ENCODE measurements at regions of chr19 and their contacts with region 1.

Region 1: GRCh38 chr19:11293433-11294389 is 2.2 kb upstream of the TSPAN16 start:
- DNase-seq: peak; percentile 94
- H3K4me3 ChIP-seq: peak overlapping the region in 1 of 3 experiments; percentile 17
- H3K27ac ChIP-seq: no peak overlapping the region
- H3K4me1 ChIP-seq: no peaks in the 10 kb centered on the region
- H3K27me3 ChIP-seq: peaks cover 0 to under 1% of the 10 kb centered on the region in 2 experiments
- CTCF ChIP-seq: peak; percentile 97 to 99
- POLR2A ChIP-seq: peak; percentile 51

Region 2: DNA sequence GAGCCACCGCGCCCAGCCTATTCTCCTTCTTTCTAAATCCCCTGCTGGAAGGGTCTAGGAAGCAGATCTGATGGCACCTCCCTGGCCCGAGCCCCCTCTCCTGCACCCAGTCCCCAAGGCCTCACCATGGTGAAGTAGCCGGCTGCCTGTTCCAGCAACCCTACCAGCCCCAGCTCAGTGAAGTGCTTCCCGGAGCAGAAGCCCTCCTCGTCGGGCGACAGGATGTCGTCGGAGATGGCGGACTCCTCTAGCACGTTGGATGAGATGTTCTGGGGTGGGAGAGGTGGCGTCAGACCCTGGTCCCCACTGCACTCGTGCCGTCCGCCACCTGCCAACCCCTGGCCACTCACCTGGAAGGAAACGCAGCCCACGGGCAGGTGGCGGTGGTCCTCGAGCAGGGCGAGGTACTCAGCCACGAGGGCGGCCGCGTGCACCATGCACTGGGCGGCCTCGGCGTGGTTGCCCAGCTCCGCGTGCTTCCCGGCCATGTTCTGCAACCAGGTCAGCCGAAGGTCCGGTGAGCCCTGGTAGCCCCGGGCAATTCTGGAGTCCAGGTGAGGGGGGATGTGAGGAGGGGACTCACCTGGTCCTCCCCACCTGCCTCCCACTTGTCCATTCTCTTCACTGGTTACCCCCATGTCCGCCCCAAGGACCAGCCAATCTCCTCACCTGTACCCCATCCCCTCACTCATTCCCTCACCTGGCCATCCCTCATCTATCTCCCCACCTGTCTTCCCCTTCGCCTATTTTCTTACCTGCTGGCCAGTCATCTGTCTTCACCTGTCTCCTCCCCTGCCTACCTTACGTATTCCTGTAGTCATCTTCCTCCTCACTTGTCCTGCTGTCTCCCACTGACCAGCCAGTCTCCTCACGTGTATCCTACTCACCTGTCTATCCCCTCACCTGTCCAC is 84.9 kb before region 1 on chr19:
- CTCF ChIA-PET with region 1: no interaction called
- POLR2A ChIA-PET with region 1: no interaction called
- dilution Hi-C with region 1: no loop called
- intact Hi-C with region 1: no loop called
- DNase-seq: no peak
- H3K4me3 ChIP-seq: no peak overlapping the region
- H3K27ac ChIP-seq: no peak overlapping the region
- H3K4me1 ChIP-seq: peaks cover 5% of the 10 kb centered on the region
- H3K27me3 ChIP-seq: no peaks in the 10 kb centered on the region
- CTCF ChIP-seq: no peak
- POLR2A ChIP-seq: no peak

Region 3: DNA sequence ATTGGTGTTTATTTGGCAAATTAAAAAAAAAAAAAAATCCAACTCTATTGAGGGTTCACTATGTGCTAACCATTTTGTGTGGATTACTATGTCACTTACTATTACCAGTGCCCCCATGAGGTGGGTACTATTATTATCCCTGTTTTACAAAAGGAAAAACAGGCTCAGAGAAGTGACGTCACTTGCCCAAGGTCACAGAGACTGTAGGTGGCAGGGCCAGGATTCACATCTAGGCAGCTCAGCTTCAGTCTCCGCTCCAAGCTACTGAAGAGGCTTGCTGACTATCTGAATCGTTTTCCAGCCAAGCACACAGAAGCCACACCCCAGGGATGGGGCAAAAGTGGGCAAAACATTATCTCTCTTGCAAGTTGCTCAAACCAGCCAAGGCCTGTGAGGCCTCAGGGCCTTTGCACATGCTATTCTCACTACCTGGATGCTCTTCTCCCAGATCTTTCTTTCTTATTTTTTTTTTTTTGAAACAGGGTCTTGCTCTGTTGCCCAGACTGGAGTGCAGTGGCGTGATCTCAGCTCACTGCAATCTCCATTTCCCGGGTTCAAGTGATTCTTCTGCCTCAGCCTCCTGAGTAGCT is 59.1 kb before region 1 on chr19:
- CTCF ChIA-PET with region 1: no interaction called
- POLR2A ChIA-PET with region 1: no interaction called
- dilution Hi-C with region 1: no loop called
- intact Hi-C with region 1: no loop called
- DNase-seq: no peak
- H3K4me3 ChIP-seq: no peak overlapping the region
- H3K27ac ChIP-seq: no peak overlapping the region
- H3K4me1 ChIP-seq: no peaks in the 10 kb centered on the region
- H3K27me3 ChIP-seq: no peaks in the 10 kb centered on the region
- CTCF ChIP-seq: no peak
- POLR2A ChIP-seq: no peak

Region 4: GRCh38 chr19:11279496-11280236 is 14.0 kb before region 1 on chr19:
- CTCF ChIA-PET with region 1: interaction called, 23 read pairs
- POLR2A ChIA-PET with region 1: no interaction called
- dilution Hi-C with region 1: no loop called
- intact Hi-C with region 1: no loop called
- DNase-seq: no peak
- H3K4me3 ChIP-seq: no peak overlapping the region
- H3K27ac ChIP-seq: no peak overlapping the region
- H3K4me1 ChIP-seq: peaks cover 7% of the 10 kb centered on the region
- H3K27me3 ChIP-seq: no peaks in the 10 kb centered on the region
- CTCF ChIP-seq: no peak
- POLR2A ChIP-seq: no peak

Region 5: GRCh38 chr19:11339254-11340098 is 45.8 kb after region 1 on chr19 and contains the start of gene RAB3D:
- CTCF ChIA-PET with region 1: interaction called, 23 read pairs
- POLR2A ChIA-PET with region 1: no interaction called
- dilution Hi-C with region 1: no loop called
- intact Hi-C with region 1: loop called (anchors 1 kb)
- DNase-seq: peak; percentile 88
- H3K4me3 ChIP-seq: peak within 1 kb of the TSS; percentile 43 to 91 (median 52)
- H3K27ac ChIP-seq: no peak within 1 kb of the TSS
- H3K4me1 ChIP-seq: peaks cover 16% of the 10 kb centered on the region
- H3K27me3 ChIP-seq: no peaks in the 10 kb centered on the region
- CTCF ChIP-seq: no peak
- POLR2A ChIP-seq: peak; percentile 54
- total RNA-seq, gene RAB3D: 41.1 and 48.2 TPM in 2 replicates

Region 6: DNA sequence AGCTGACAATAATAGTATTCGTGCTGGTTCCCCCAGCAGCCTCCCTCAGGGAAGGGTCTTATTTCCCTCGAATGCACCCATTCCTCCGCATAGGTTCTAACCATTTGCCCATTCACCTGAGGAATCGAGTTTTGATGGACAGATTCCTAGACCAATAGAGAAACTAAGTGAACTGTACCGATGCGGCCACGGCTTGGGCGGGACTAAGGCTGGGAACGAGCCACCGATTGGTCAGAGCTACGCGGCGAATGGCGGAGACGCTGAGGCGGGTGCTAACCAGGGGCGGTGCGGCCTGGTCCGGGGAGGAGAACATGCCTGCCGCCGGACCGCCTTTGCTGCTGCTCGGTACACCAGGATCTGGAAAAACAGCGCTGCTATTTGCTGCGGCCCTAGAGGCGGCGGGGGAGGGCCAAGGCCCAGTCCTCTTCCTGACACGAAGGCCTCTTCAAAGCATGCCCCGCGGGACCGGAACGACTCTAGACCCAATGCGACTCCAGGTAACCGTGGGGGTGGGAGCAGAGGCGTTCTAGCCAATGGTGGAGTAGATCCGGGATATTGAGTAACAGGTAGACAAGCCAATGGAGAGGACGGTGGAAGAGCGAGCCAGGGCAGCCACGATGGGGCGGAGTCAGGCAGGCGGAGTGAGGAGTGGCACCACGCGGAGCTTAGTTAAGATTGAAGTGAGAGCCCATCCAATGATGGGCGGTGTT is 80.9 kb after region 1 on chr19 and contains the start of gene SWSAP1:
- CTCF ChIA-PET with region 1: interaction called, 22 read pairs
- POLR2A ChIA-PET with region 1: interaction called, 3 read pairs
- dilution Hi-C with region 1: no loop called
- intact Hi-C with region 1: no loop called
- DNase-seq: peak; percentile 100
- H3K4me3 ChIP-seq: peak within 1 kb of the TSS; percentile 35 to 65 (median 56)
- H3K27ac ChIP-seq: peak within 1 kb of the TSS; percentile 70
- H3K4me1 ChIP-seq: peaks cover 39% of the 10 kb centered on the region
- H3K27me3 ChIP-seq: no peaks in the 10 kb centered on the region
- CTCF ChIP-seq: no peak
- POLR2A ChIP-seq: peak; percentile 68
- total RNA-seq, gene SWSAP1: 2.7 and 3.7 TPM in 2 replicates

Region 7: GRCh38 chr19:11405846-11406643 is 112.3 kb after region 1 on chr19:
- CTCF ChIA-PET with region 1: interaction called, 22 read pairs
- POLR2A ChIA-PET with region 1: no interaction called
- dilution Hi-C with region 1: no loop called
- intact Hi-C with region 1: no loop called
- DNase-seq: no peak
- H3K4me3 ChIP-seq: no peak overlapping the region
- H3K27ac ChIP-seq: no peak overlapping the region
- H3K4me1 ChIP-seq: no peaks in the 10 kb centered on the region
- H3K27me3 ChIP-seq: no peaks in the 10 kb centered on the region
- CTCF ChIP-seq: peak in 1 of 2 donors; percentile 53
- POLR2A ChIP-seq: no peak

Region 8: GRCh38 chr19:11435058-11435832 is 141.5 kb after region 1 on chr19 and contains the starts of genes ODAD3 and PRKCSH:
- CTCF ChIA-PET with region 1: interaction called, 19 read pairs
- POLR2A ChIA-PET with region 1: no interaction called
- dilution Hi-C with region 1: no loop called
- intact Hi-C with region 1: no loop called
- DNase-seq: peak; percentile 100
- H3K4me3 ChIP-seq: peak within 1 kb of the TSS; percentile 71 to 88 (median 82)
- H3K27ac ChIP-seq: peak within 1 kb of the TSS; percentile 88
- H3K4me1 ChIP-seq: peaks cover 12% of the 10 kb centered on the region
- H3K27me3 ChIP-seq: no peaks in the 10 kb centered on the region
- CTCF ChIP-seq: peak; percentile 86 to 89
- POLR2A ChIP-seq: peak; percentile 83
- total RNA-seq, gene ODAD3: 0.97 TPM in 1 of 2 replicates, not detected in the other
- total RNA-seq, gene PRKCSH: 387 and 425 TPM in 2 replicates

Region 9: GRCh38 chr19:11482384-11483050 is 188.8 kb after region 1 on chr19:
- CTCF ChIA-PET with region 1: interaction called, 48 read pairs
- POLR2A ChIA-PET with region 1: interaction called, 3 read pairs
- dilution Hi-C with region 1: no loop called
- intact Hi-C with region 1: loop called (anchors 1 kb)
- DNase-seq: peak; percentile 78
- H3K4me3 ChIP-seq: peak overlapping the region in 1 of 3 experiments; percentile 27
- H3K27ac ChIP-seq: no peak overlapping the region
- H3K4me1 ChIP-seq: peaks cover 3% of the 10 kb centered on the region
- H3K27me3 ChIP-seq: peaks cover 13 to 25% of the 10 kb centered on the region in 2 experiments
- CTCF ChIP-seq: peak; percentile 94 to 95
- POLR2A ChIP-seq: no peak

Region 10: DNA sequence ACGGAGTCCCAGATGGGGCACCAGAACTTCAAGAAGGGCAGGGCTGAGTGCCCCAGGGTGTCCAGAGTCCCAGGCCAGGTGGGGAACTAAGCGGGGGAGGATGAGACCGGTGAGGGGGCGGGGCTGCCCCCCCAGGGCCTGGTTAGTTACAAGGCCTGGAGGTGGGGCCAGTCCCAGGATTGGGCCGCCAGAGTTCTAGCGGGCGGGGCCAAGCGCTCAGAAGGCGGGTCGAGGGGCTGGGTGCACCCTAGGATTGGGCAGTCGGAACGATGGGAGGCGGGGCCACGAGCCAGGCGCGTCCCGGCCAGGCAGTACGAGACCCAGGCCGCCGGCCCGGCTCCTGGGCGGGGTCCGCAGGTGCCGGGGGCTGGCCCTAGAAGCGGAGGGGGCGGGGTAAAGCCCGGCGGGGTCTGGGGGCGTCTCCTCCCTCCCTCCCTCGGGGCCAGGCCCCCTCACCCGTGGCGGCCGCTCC is 211.4 kb after region 1 on chr19:
- CTCF ChIA-PET with region 1: no interaction called
- POLR2A ChIA-PET with region 1: no interaction called
- dilution Hi-C with region 1: no loop called
- intact Hi-C with region 1: no loop called
- DNase-seq: peak; percentile 98
- H3K4me3 ChIP-seq: peak overlapping the region; percentile 44 to 71 (median 71)
- H3K27ac ChIP-seq: peak overlapping the region; percentile 81
- H3K4me1 ChIP-seq: peaks cover 10% of the 10 kb centered on the region
- H3K27me3 ChIP-seq: no peaks in the 10 kb centered on the region
- CTCF ChIP-seq: no peak
- POLR2A ChIP-seq: no peak

Measured in endothelial cell of umbilical vein (primary cell).